Posterior vena cava (tissue), 2 donors: ENCODE measurements at regions of chr9 and their contacts with region 1.

Region 1: DNA sequence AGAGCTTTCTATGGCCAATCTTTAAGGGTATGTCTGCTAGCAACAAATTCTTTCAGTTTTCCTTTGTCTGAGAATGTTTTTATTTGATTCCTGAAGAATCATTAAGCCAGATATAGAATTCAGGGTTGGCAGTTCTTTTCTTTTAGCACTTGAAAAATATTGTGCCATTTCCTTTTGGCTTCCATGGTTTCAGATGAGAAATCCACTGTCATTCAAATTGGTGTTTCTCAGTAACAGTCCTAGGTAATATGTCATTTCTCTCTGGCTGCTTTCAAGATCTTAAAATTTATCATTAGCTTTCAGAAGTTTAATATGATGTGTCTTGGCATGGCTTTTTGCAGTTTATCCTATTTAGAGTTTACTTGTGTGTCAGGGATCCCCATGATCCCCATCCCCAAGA is 67.7 kb downstream of the TEX10 start:
- DNase-seq: no peak

Region 2: DNA sequence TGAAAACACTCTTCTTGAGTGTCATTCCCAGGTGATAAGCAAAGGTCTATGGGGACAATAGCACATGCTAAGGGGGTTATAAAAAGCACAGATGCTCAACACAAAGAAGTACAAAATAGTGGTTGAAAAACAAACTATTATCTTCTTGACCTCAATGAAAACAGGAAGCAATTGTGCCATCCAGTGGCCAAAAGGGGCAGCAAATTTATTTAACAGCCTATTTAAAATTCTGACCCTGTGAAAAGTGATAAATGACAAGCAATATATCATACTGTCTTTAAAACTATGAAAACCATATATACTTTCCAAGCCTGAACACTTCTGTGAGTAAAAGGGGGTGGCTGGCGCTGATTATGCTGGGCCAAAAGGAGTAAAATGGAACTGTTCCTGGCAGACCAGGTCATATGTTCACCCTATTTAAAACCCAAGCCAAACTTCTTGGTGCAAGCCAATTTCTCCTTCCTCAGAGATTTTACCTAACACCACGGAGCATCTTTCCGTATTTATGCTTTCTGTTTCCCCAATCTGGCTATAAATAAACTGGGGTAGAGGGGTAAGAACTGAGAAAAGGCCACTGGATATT is 38.0 kb after region 1 on chr9:
- intact Hi-C with region 1: no loop called
- DNase-seq: no peak

Region 3: DNA sequence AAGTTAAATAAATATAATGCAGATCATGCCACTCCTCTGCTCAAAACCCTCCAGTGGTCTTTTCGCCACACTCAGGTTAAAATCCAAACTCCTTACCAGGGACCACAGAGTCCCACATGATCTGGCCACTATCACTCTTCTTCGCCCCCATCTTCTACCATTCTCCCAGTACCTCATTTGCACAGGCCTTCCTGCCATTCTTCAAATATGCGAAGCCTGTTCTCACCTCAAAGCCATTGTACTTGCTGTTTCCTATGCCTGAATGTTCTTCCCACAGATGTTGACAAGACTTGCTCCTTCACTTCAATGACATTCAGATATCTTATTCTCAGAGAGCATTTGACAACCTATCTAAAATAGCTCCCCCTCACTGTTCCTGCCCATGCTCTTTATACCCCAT is 56.8 kb after region 1 on chr9:
- intact Hi-C with region 1: loop called in 1 of 2 experiments (anchors 2 kb)
- DNase-seq: no peak